Naive thymus-derived CD4-positive, alpha-beta T cell (primary cell): ENCODE measurements at regions of chr1 and their contacts with region 1.

Region 1: GRCh38 chr1:100928128-100928527 is 32.2 kb downstream of the SLC30A7 start:
- DNase-seq: peak in 1 of 9 donors; percentile 9
- ATAC-seq: peak; percentile 30
- H3K4me3 ChIP-seq: peak overlapping the region; percentile 15
- H3K4me3 Mint-ChIP-seq: no peak overlapping the region
- H3K27ac ChIP-seq: peak overlapping the region; percentile 74
- H3K27ac Mint-ChIP-seq: no peak overlapping the region
- H3K4me1 ChIP-seq: peaks cover 76 to 84% of the 10 kb centered on the region in 2 donors
- H3K4me1 Mint-ChIP-seq: peaks cover 26 to 61% (median 39%) of the 10 kb centered on the region in 7 donors
- H3K27me3 ChIP-seq: no peaks in the 10 kb centered on the region
- H3K27me3 Mint-ChIP-seq: no peaks in the 10 kb centered on the region

Region 2: GRCh38 chr1:100785470-100786052 is 142.6 kb before region 1 on chr1:
- CTCF ChIA-PET with region 1: no interaction called
- POLR2A ChIA-PET with region 1: no interaction called
- intact Hi-C with region 1: no loop called
- DNase-seq: no peak
- ATAC-seq: no peak
- H3K4me3 ChIP-seq: no peak overlapping the region
- H3K4me3 Mint-ChIP-seq: peak overlapping the region in 1 of 10 donors; percentile 42
- H3K27ac ChIP-seq: no peak overlapping the region
- H3K27ac Mint-ChIP-seq: no peak overlapping the region
- H3K4me1 ChIP-seq: no peaks in the 10 kb centered on the region
- H3K4me1 Mint-ChIP-seq: peaks cover 0 to 7% (median 0%) of the 10 kb centered on the region in 7 donors
- H3K27me3 ChIP-seq: no peaks in the 10 kb centered on the region
- H3K27me3 Mint-ChIP-seq: peaks cover 5 to 35% (median 25%) of the 10 kb centered on the region in 5 donors

Region 3: DNA sequence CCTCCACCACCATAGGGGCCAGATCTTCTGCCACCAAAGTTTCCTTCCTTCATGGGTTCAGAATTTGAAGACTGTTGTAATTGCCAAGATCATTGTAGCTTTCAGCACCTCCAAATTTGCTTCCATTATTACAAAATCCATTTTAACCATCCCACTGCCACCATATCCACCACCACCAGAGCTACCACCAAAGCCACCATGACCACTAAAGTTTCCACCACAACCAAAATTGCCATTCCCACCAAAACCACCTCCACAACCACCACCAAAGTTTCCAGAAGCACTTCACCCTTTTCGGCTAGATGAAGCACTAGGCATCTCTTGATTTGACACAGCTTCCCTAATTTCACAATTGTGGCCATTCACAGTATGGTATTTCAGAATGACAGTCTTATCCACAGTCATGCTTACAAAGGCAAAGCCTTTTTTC is 13.0 kb after region 1 on chr1:
- CTCF ChIA-PET with region 1: interaction called, 11 read pairs
- POLR2A ChIA-PET with region 1: interaction called, 37 read pairs
- intact Hi-C with region 1: loop called in 1 of 2 experiments (anchors 1 kb)
- DNase-seq: peak in 1 of 9 donors; percentile 56
- ATAC-seq: no peak
- H3K4me3 ChIP-seq: no peak overlapping the region
- H3K4me3 Mint-ChIP-seq: peak overlapping the region; percentile 61 to 82 (median 72)
- H3K27ac ChIP-seq: no peak overlapping the region
- H3K27ac Mint-ChIP-seq: peak overlapping the region; percentile 87 to 99 (median 95)
- H3K4me1 ChIP-seq: peaks cover 5 to 35% of the 10 kb centered on the region in 2 donors
- H3K4me1 Mint-ChIP-seq: peaks cover 38 to 75% (median 69%) of the 10 kb centered on the region in 7 donors
- H3K27me3 ChIP-seq: no peaks in the 10 kb centered on the region
- H3K27me3 Mint-ChIP-seq: peaks cover 0 to 2% (median 0%) of the 10 kb centered on the region in 5 donors

Region 4: GRCh38 chr1:100955322-100955721 is 27.2 kb after region 1 on chr1:
- CTCF ChIA-PET with region 1: no interaction called
- POLR2A ChIA-PET with region 1: interaction called, 44 read pairs
- intact Hi-C with region 1: no loop called
- DNase-seq: no peak
- ATAC-seq: no peak
- H3K4me3 ChIP-seq: no peak overlapping the region
- H3K4me3 Mint-ChIP-seq: peak overlapping the region in 2 of 10 donors; percentile 18 to 22
- H3K27ac ChIP-seq: no peak overlapping the region
- H3K27ac Mint-ChIP-seq: no peak overlapping the region
- H3K4me1 ChIP-seq: peaks cover 5 to 6% of the 10 kb centered on the region in 2 donors
- H3K4me1 Mint-ChIP-seq: peaks cover 17 to 74% (median 57%) of the 10 kb centered on the region in 7 donors
- H3K27me3 ChIP-seq: no peaks in the 10 kb centered on the region
- H3K27me3 Mint-ChIP-seq: no peaks in the 10 kb centered on the region

Region 5: GRCh38 chr1:100972185-100972584 is 44.1 kb after region 1 on chr1:
- CTCF ChIA-PET with region 1: interaction called, 3 read pairs
- POLR2A ChIA-PET with region 1: interaction called, 4 read pairs
- intact Hi-C with region 1: loop called in 1 of 2 experiments (anchors 2 kb)
- DNase-seq: no peak
- ATAC-seq: no peak
- H3K4me3 ChIP-seq: no peak overlapping the region
- H3K4me3 Mint-ChIP-seq: peak overlapping the region in 2 of 10 donors; percentile 11 to 44
- H3K27ac ChIP-seq: no peak overlapping the region
- H3K27ac Mint-ChIP-seq: peak overlapping the region in 5 of 9 donors; percentile 10 to 74 (median 31)
- H3K4me1 ChIP-seq: peaks cover 0 to 19% of the 10 kb centered on the region in 2 donors
- H3K4me1 Mint-ChIP-seq: peaks cover 15 to 73% (median 55%) of the 10 kb centered on the region in 7 donors
- H3K27me3 ChIP-seq: no peaks in the 10 kb centered on the region
- H3K27me3 Mint-ChIP-seq: no peaks in the 10 kb centered on the region

Region 6: GRCh38 chr1:101128211-101128727 is 200.1 kb after region 1 on chr1:
- CTCF ChIA-PET with region 1: no interaction called
- POLR2A ChIA-PET with region 1: interaction called, 4 read pairs
- intact Hi-C with region 1: loop called (anchors 1 to 2 kb)
- DNase-seq: peak in 7 of 9 donors; percentile 38 to 72 (median 60)
- ATAC-seq: peak; percentile 79
- H3K4me3 ChIP-seq: no peak overlapping the region
- H3K4me3 Mint-ChIP-seq: peak overlapping the region; percentile 17 to 80 (median 72)
- H3K27ac ChIP-seq: peak overlapping the region; percentile 64
- H3K27ac Mint-ChIP-seq: peak overlapping the region; percentile 85 to 96 (median 91)
- H3K4me1 ChIP-seq: peaks cover 26 to 49% of the 10 kb centered on the region in 2 donors
- H3K4me1 Mint-ChIP-seq: peaks cover 42 to 83% (median 66%) of the 10 kb centered on the region in 7 donors
- H3K27me3 ChIP-seq: no peaks in the 10 kb centered on the region
- H3K27me3 Mint-ChIP-seq: no peaks in the 10 kb centered on the region

Region 7: DNA sequence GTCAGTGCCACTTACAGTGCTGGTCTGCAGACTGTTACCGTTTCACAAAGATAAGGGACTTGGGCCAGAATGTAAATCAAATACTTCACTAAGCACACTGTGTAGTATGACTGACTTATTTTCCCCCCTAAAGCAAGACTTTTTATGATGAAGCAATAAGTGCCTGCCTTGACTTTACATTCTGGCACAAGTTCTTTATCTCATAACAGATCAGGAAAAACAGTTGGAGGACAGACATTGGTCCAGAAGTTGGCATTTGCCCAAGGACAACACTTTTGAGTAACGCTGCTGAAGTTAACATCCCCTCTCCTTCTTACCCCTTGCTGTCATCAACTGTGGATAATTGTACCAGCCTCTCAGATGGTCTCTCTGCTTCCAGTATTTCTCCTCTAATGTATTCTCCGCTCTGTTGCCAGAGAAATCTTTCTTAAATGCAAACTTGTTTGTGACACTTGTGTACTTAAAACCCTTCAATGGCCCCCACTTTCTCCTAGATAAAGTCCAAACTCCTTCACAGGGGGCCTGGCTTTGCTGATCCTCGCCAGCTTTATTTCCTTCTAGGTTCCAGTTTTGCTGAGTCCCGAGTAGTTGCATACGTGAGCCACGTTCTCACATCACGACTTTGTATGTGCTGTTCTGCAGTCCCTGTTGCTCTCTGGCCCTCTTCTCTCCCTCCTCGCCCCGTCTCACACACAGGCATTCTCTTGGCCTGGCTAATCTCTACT is 354.3 kb after region 1 on chr1:
- CTCF ChIA-PET with region 1: interaction called, 88 read pairs
- POLR2A ChIA-PET with region 1: interaction called, 47 read pairs
- intact Hi-C with region 1: loop called in 1 of 2 experiments (anchors 1 kb)
- DNase-seq: no peak
- ATAC-seq: no peak
- H3K4me3 ChIP-seq: no peak overlapping the region
- H3K4me3 Mint-ChIP-seq: peak overlapping the region in 7 of 10 donors; percentile 11 to 94 (median 84)
- H3K27ac ChIP-seq: peak overlapping the region; percentile 77
- H3K27ac Mint-ChIP-seq: peak overlapping the region in 8 of 9 donors; percentile 85 to 99 (median 98)
- H3K4me1 ChIP-seq: peaks cover 92 to 95% of the 10 kb centered on the region in 2 donors
- H3K4me1 Mint-ChIP-seq: peaks cover 67 to 96% (median 95%) of the 10 kb centered on the region in 7 donors
- H3K27me3 ChIP-seq: no peaks in the 10 kb centered on the region
- H3K27me3 Mint-ChIP-seq: peaks cover 0 to 2% (median 0%) of the 10 kb centered on the region in 5 donors